Cardiac septum (tissue), 1 donor: ENCODE measurements at regions of chr3 and their contacts with region 1.

Region 1: DNA sequence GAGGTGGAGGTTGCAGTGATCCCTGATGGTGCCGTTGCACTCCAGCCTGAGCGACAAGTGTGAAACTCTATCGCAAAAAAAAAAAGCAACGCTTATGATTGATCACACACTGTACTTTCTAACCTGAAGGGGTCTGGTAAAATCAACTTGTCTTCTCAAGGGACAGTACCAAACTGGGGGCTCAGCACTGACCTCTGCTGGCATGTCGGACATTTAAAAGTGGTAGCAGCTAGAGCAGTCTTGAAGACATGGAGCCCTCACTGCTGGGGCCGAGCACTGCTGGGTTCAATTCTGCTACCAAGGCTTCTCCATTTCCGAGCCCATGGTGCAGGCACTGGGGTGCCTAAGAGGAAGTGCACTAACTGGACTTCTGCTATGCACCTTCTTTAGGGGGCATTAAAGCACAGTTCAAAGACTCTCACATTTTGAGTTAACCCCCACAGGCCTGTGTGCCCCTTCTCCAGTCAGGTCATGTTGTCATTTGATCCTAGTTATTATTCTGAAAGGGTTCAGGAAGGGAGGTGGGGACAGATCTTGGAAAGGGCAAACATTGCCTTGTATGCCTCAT is 26.4 kb upstream of the LAMP3 start:
- DNase-seq: no peak

Region 2: DNA sequence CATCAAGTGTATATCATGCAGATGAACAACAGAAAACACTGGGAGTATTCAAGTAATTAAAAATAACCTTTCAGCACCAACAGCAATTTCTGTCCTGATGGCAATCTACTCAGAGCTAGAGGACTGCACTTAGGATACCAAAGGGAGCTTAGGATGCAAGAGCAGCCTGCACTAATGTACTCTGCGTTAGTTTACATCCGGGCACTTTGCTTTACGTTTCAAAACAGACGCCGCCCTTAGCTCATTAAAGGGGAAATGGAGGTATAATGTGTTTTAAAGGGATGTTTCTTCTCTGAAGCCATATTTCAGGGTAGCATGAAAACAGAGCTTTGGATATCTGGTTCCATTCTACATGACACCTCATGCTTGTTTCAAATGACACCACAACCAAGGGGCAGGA is 50.1 kb after region 1 on chr3:
- intact Hi-C with region 1: no loop called
- DNase-seq: no peak

Region 3: DNA sequence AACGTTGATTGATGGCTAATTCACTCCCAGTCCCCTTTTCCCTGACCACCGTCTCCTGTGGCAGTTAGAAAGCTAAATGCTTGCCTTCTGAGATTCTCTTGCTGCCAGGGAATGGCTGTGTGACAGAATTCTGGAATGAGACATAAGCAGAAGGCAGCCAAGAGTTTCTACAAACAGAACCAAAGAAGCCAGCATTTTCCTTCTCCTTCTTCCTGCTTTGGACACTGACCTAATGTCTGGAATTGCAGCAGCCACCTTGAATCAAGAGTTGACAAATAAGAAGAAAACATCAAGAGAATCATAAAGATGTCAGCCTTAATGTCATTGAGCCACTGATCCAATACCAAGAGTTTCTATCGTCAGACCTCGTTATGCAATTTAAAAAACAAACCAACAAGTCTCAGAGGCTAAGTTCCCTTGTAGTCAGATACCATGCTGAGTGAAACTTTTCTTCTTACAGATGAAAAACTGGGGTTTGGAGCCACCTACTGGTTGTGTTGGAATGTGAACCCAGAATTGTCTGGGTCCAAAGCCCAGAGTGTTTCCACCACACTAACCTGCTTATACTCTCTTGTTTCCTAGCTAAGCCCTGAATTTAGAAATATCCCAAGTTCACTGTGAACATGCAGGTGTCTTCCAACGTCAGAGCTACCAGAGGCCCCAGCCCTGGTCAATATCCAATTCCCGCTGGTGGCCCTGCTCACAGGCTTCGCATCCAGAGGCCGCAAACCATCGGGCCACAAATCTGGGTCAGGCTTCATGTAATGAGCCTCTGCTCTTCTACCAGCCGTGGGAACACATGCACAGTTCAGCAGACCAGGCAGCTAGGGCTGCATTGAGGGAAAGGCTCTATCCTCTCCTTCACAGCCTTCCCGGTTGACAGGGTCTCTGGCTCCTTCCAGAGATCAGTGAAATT is 197.0 kb after region 1 on chr3:
- intact Hi-C with region 1: loop called (anchors 2 kb)
- DNase-seq: no peak